B cell (primary cell): ENCODE measurements at regions of chr6 and their contacts with region 1.

Region 1: DNA sequence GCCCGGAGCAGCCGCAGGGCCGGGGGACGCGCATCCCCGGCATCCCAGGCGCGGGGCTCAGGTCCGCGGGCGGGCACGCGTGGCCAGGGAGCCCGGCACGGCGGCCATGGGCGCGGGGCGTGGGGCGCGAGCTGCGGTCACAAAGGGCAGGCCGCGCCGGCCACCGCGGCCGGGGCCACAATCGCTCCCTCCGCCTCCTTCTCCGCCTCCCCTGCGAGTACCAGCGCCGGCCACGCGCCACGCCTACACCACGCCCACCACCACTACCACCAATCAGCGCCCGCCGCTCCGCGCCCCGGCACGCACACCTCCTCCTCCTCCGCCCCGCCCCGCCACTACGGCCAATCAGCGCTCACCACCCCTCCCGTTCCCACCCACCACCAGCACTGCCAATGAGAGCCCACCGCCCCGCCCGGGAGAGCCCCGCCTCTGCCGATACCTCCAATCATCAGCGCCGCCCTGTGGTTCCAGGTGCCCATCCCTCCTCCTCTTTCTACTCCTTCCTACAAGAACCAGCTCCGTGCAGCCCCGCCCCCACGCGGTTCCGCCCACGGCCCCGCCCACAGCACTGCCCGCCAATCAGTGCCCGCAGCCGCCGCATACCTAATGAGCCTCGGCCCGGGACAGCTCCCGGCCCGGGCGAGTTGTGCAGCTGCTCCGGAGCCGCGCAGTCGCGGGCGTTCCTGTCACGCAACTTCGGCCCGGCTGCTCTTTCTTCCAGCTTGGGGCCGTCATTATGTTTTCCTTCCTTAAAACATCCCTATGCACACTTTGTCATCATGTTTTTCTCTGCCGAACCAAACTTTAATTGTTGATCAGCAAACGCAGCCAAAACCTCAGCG is at the start of gene RPS6KA2:
- DNase-seq: peak; percentile 100
- ATAC-seq: peak; percentile 91
- H3K4me3 ChIP-seq: peak within 1 kb of the TSS; percentile 54 to 95 (median 70)
- H3K4me3 Mint-ChIP-seq: peak within 1 kb of the TSS; percentile 85
- H3K27ac ChIP-seq: peak within 1 kb of the TSS; percentile 37 to 44
- H3K27ac Mint-ChIP-seq: peak within 1 kb of the TSS; percentile 93
- H3K4me1 ChIP-seq: peaks cover 18 to 19% of the 10 kb centered on the region in 2 donors
- H3K4me1 Mint-ChIP-seq: peaks cover 27% of the 10 kb centered on the region
- H3K27me3 ChIP-seq: peaks cover 0 to 45% (median 21%) of the 10 kb centered on the region in 4 experiments
- H3K27me3 Mint-ChIP-seq: peaks cover 16% of the 10 kb centered on the region
- CTCF ChIP-seq: no peak
- total RNA-seq, gene RPS6KA2: 16.0 and 17.1 TPM in 2 replicates

Region 2: DNA sequence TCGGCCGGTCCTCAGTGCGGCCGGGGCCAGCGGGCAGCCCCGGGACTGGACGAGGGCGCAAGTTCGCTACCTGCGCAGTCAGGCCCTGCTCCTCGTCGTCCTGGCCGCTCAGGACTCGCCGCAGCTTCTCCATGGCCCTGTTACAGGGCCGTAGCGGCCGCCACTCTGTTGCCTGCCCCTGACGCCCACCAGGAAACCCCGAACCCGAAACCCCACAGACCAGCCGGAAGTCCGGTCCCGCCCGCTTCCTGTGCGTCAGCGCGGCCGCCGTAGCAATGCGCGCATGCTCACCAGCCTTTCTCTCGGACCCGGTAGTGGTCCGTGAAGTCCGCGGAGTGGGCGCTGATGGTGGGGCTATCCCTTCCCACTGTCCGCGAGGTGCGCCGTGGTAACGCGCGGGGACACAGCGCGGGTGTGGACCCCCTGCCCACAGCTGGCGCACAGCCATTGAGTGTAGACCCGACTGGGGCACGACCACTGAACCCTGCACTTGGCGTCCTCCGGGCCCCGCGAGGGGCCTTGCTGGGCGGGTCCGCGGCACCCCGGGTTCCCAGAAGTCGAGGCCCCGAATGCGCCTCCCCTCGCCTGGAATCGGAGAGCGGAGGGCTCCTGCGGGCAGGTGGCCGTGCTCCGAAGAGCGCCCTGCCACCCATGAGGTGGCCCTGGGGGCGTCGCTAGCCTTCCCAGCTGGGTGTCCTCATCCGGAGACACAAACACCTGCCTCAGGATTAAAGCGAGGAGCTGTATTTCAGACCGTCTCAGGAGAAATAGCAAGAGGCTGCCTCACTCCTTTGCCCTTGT is 284.7 kb before region 1 on chr6 and contains the start of gene SFT2D1:
- CTCF ChIA-PET with region 1: no interaction called
- POLR2A ChIA-PET with region 1: no interaction called
- intact Hi-C with region 1: loop called (anchors 1 kb)
- DNase-seq: peak; percentile 89
- ATAC-seq: peak; percentile 79
- H3K4me3 ChIP-seq: peak within 1 kb of the TSS; percentile 91 to 100 (median 97)
- H3K4me3 Mint-ChIP-seq: peak within 1 kb of the TSS; percentile 90
- H3K27ac ChIP-seq: peak within 1 kb of the TSS; percentile 99 to 100
- H3K27ac Mint-ChIP-seq: peak within 1 kb of the TSS; percentile 97
- H3K4me1 ChIP-seq: peaks cover 34 to 44% of the 10 kb centered on the region in 2 donors
- H3K4me1 Mint-ChIP-seq: peaks cover 17% of the 10 kb centered on the region
- H3K27me3 ChIP-seq: no peaks in the 10 kb centered on the region
- H3K27me3 Mint-ChIP-seq: no peaks in the 10 kb centered on the region
- CTCF ChIP-seq: no peak
- total RNA-seq, gene SFT2D1: 52.0 and 59.0 TPM in 2 replicates

Region 3: DNA sequence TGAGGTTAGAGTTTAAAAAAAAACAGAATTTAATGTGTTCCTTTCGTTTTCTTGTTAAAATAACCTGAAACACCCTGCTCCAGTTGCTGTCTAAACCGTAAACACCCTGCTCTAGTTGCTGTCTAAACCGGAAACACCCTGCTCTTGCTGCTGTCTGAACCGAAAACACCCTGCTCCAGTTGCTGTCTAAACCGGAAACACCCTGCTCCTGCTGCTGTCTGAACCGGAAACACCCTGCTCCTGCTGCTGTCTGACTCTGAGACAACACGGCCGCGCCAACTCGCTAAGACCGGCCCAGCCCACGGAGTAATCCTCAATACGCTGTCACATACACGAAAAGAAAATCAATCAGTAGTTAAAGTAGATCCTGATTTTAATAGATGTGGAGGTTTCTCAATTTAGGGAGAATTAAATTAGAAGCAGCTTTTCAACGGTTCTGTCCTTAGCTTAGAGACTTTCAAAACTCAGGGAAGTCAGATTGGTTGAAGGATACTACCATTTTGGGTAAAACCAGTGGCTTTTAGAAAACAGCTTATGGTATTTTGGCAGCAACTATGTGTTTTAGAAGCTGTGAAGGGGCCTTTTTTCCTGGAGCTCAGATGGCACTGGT is 139.1 kb before region 1 on chr6:
- CTCF ChIA-PET with region 1: no interaction called
- POLR2A ChIA-PET with region 1: no interaction called
- intact Hi-C with region 1: loop called (anchors 1 kb)
- DNase-seq: peak; percentile 88
- ATAC-seq: peak; percentile 94
- H3K4me3 ChIP-seq: peak overlapping the region; percentile 8 to 53 (median 28)
- H3K4me3 Mint-ChIP-seq: peak overlapping the region; percentile 77
- H3K27ac ChIP-seq: peak overlapping the region; percentile 89 to 92
- H3K27ac Mint-ChIP-seq: peak overlapping the region; percentile 99
- H3K4me1 ChIP-seq: peaks cover 14 to 17% of the 10 kb centered on the region in 2 donors
- H3K4me1 Mint-ChIP-seq: peaks cover 19% of the 10 kb centered on the region
- H3K27me3 ChIP-seq: no peaks in the 10 kb centered on the region
- H3K27me3 Mint-ChIP-seq: no peaks in the 10 kb centered on the region
- CTCF ChIP-seq: no peak

Region 4: GRCh38 chr6:166520905-166521834 is 106.1 kb before region 1 on chr6:
- CTCF ChIA-PET with region 1: no interaction called
- POLR2A ChIA-PET with region 1: no interaction called
- intact Hi-C with region 1: no loop called
- DNase-seq: no peak
- ATAC-seq: no peak
- H3K4me3 ChIP-seq: no peak overlapping the region
- H3K4me3 Mint-ChIP-seq: no peak overlapping the region
- H3K27ac ChIP-seq: no peak overlapping the region
- H3K27ac Mint-ChIP-seq: no peak overlapping the region
- H3K4me1 ChIP-seq: no peaks in the 10 kb centered on the region
- H3K4me1 Mint-ChIP-seq: no peaks in the 10 kb centered on the region
- H3K27me3 ChIP-seq: no peaks in the 10 kb centered on the region
- H3K27me3 Mint-ChIP-seq: no peaks in the 10 kb centered on the region
- CTCF ChIP-seq: no peak

Region 5: DNA sequence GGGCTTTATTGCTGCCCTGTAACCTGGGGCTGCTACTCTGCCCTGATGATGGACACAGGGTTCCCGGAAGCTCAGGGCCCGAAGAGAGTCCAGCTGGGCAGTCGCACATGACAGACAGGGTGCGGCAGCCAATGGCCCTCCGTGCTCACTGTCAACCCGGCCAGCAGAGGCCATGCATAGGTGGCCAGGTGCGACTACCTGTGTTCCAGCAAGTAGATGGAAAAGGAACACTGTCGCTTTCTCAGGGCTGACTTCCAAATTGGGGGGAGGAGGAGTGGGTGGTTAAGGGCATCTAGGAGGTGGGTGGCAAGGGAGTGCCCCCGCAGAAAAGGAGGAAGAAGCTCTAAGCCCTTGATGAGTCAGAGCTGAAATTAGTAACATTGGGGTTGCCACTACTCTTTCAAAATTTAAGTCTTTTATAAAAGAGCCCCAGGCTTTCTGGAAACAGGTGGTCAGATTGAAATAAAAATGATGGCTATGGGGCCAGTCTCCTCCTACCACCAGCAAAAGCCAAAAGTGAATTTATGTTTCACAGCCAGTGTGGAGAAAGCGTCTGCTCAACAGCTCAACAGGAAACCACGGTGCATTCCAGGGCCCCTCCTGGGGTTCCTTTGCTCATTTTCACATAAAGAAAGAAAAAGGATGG is 38.4 kb before region 1 on chr6:
- CTCF ChIA-PET with region 1: interaction called, 10 read pairs
- POLR2A ChIA-PET with region 1: interaction called, 7 read pairs
- intact Hi-C with region 1: loop called (anchors 1 kb)
- DNase-seq: peak; percentile 33
- ATAC-seq: peak; percentile 35
- H3K4me3 ChIP-seq: peak overlapping the region in 2 of 5 experiments; percentile 17 to 34
- H3K4me3 Mint-ChIP-seq: peak overlapping the region; percentile 73
- H3K27ac ChIP-seq: peak overlapping the region; percentile 48 to 60
- H3K27ac Mint-ChIP-seq: peak overlapping the region; percentile 90
- H3K4me1 ChIP-seq: peaks cover 38 to 46% of the 10 kb centered on the region in 2 donors
- H3K4me1 Mint-ChIP-seq: peaks cover 43% of the 10 kb centered on the region
- H3K27me3 ChIP-seq: no peaks in the 10 kb centered on the region
- H3K27me3 Mint-ChIP-seq: no peaks in the 10 kb centered on the region
- CTCF ChIP-seq: no peak

Region 6: GRCh38 chr6:166956444-166957086 is 329.3 kb after region 1 on chr6 and contains the start of gene RNASET2:
- CTCF ChIA-PET with region 1: no interaction called
- POLR2A ChIA-PET with region 1: no interaction called
- intact Hi-C with region 1: loop called (anchors 2 kb)
- DNase-seq: peak; percentile 96
- ATAC-seq: peak; percentile 85
- H3K4me3 ChIP-seq: peak within 1 kb of the TSS; percentile 79 to 97 (median 89)
- H3K4me3 Mint-ChIP-seq: peak within 1 kb of the TSS; percentile 93
- H3K27ac ChIP-seq: peak within 1 kb of the TSS; percentile 94 to 98
- H3K27ac Mint-ChIP-seq: peak within 1 kb of the TSS; percentile 100
- H3K4me1 ChIP-seq: peaks cover 65 to 78% of the 10 kb centered on the region in 2 donors
- H3K4me1 Mint-ChIP-seq: peaks cover 73% of the 10 kb centered on the region
- H3K27me3 ChIP-seq: no peaks in the 10 kb centered on the region
- H3K27me3 Mint-ChIP-seq: no peaks in the 10 kb centered on the region
- CTCF ChIP-seq: no peak
- total RNA-seq, gene RNASET2: 293 and 302 TPM in 2 replicates

Region 7: DNA sequence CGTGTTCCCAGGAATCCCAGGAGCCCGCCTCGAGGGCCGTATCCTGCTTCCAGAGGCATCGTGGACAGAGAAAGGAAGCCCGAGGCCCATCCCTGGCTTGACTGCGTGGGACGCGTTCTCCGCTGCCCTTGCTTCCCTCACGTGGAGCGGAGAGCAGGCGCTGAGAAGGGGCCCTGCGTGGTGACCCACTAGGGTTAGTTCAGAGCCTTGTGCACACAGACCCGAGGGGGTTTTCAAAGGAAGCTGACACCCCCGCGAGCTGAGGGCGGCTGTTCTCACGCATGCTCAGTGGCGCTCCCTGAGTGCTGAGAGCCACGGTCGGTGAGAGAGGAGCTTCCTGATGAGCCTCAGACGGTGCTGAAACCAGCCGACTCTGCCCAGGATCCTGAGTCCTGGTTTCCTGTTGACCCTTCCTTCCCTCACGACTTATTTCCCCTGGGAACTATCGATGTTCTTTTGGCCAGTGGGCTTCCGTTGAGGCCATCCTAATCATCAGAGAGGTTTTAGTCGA is 466.7 kb after region 1 on chr6:
- CTCF ChIA-PET with region 1: no interaction called
- POLR2A ChIA-PET with region 1: interaction called, 3 read pairs
- intact Hi-C with region 1: loop called (anchors 5 kb)
- DNase-seq: peak; percentile 94
- ATAC-seq: peak; percentile 48
- H3K4me3 ChIP-seq: peak overlapping the region; percentile 13 to 80 (median 64)
- H3K4me3 Mint-ChIP-seq: peak overlapping the region; percentile 94
- H3K27ac ChIP-seq: peak overlapping the region; percentile 98 to 99
- H3K27ac Mint-ChIP-seq: peak overlapping the region; percentile 98
- H3K4me1 ChIP-seq: peaks cover 99% of the 10 kb centered on the region in 2 donors
- H3K4me1 Mint-ChIP-seq: peaks cover 93% of the 10 kb centered on the region
- H3K27me3 ChIP-seq: no peaks in the 10 kb centered on the region
- H3K27me3 Mint-ChIP-seq: no peaks in the 10 kb centered on the region
- CTCF ChIP-seq: no peak

Region 8: GRCh38 chr6:167826230-167826895 is 1199.1 kb after region 1 on chr6:
- CTCF ChIA-PET with region 1: no interaction called
- POLR2A ChIA-PET with region 1: no interaction called
- intact Hi-C with region 1: loop called (anchors 2 kb)
- DNase-seq: peak; percentile 82
- ATAC-seq: peak; percentile 85
- H3K4me3 ChIP-seq: peak overlapping the region; percentile 39 to 92 (median 64)
- H3K4me3 Mint-ChIP-seq: peak overlapping the region; percentile 92
- H3K27ac ChIP-seq: no peak overlapping the region
- H3K27ac Mint-ChIP-seq: peak overlapping the region; percentile 78
- H3K4me1 ChIP-seq: peaks cover 21 to 24% of the 10 kb centered on the region in 2 donors
- H3K4me1 Mint-ChIP-seq: peaks cover 26% of the 10 kb centered on the region
- H3K27me3 ChIP-seq: peaks cover 0 to 30% (median 18%) of the 10 kb centered on the region in 4 experiments
- H3K27me3 Mint-ChIP-seq: peaks cover 20% of the 10 kb centered on the region
- CTCF ChIP-seq: peak; percentile 35